Aorta (tissue), 5 donors: ENCODE measurements at regions of chr20 and their contacts with region 1.

Region 1: DNA sequence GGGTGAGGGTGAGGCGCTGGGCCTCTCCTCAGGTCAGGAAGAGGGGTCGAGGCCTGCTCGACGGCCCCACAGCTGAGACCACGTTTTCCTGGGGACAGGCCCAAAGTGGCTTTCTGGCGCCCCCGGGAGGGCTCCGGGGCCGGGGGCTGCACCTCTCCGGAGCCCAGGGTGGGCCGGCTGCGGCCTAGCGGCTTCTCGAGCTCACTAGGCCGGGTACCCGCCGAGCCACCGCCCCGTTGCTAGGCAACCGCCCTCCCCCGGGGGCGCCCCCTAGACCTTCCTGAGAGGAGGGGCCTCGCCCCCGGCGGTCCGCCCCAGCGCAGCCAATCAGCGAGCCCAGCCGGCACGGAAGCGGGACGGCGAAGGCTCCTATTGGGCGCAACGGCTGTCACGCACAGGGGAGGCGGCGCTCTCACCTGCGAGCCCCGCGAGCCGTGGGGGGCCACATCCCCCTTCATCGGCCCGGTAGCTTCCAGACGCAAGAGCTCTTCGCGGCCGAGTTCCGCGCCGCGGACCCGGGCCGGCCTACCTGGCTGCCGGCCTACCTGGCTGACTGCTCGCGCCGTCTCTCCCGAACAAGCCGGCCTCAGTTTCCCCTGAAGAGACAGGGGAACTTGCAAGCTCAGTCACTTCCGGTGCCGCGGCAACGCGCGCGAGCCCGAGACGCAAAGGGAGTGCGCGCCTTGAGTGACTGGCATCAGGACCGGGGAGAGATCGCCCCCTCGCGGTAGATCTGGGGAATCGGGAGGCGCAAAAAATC is 831 bp upstream of the BCL2L1 start:
- DNase-seq: peak; percentile 99
- ATAC-seq: peak; percentile 97
- H3K4me3 ChIP-seq: peak overlapping the region; percentile 65 to 94
- H3K27ac ChIP-seq: peak overlapping the region; percentile 87 to 95
- H3K4me1 ChIP-seq: no peaks in the 10 kb centered on the region
- H3K27me3 ChIP-seq: no peaks in the 10 kb centered on the region

Region 2: DNA sequence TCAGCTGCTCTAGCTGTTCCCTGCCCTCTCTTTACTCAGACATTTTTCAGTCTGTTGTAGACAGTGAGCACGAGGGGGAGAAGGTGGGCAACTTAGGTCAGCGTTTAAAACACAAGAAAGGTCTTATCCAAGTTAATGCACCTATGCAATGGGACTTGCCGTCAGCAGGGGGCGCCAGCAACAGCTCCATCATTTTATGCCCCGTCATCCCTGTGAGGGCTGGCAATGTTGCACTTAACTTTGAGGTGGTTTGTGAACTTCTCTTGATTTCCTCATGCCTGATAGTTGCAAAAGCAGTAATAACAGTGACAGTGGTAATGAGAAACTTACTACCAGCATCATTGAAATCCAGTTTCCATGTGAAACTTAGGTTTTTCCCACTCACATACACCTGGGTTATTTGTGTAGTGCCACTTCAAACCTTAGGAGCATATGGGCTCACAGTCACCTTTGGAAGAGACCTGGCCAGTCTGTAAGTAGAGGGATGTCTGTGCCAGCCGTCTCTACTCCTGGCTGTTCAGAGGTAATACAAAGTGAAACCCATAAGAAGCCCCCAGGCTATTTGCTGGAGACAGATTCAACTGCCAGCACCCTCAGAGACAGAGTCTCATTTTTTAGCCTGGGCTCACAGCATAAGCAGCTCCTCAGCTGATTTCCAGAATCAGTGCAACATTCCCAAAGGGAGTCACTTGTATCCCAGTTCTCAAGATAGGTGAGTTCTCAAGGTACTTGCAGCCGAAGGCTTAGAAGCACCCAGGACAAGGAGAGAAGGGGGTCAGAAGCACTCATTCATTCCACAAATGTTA is 163.2 kb before region 1 on chr20:
- intact Hi-C with region 1: loop called in 1 of 2 experiments (anchors 5 kb)
- DNase-seq: peak; percentile 86 to 91
- ATAC-seq: peak; percentile 75
- H3K4me3 ChIP-seq: no peak overlapping the region
- H3K27ac ChIP-seq: peak overlapping the region; percentile 91 to 92
- H3K4me1 ChIP-seq: peaks cover 3 to 4% of the 10 kb centered on the region in 2 donors
- H3K27me3 ChIP-seq: no peaks in the 10 kb centered on the region

Region 3: DNA sequence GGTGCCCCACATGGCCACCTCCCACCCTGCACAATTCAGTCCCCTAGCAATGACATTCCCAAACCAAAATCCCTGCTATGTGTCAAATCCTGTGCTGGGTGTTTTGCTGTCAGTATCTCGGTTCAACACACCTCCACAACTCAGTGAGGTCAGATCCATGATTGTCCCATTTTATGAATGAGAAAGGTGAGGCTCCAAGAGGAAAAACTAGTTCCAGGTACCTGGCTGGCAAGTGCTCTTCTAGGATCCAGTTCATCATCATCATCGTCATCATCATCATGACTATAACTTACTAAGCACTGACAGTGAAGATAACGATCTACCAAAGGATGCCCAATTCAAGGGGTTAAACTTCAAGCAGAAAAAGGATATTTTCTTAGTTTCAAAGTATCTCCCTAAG is 103.2 kb before region 1 on chr20:
- intact Hi-C with region 1: loop called in 1 of 2 experiments (anchors 5 kb)
- DNase-seq: no peak
- ATAC-seq: no peak
- H3K4me3 ChIP-seq: no peak overlapping the region
- H3K27ac ChIP-seq: no peak overlapping the region
- H3K4me1 ChIP-seq: no peaks in the 10 kb centered on the region
- H3K27me3 ChIP-seq: no peaks in the 10 kb centered on the region

Region 4: DNA sequence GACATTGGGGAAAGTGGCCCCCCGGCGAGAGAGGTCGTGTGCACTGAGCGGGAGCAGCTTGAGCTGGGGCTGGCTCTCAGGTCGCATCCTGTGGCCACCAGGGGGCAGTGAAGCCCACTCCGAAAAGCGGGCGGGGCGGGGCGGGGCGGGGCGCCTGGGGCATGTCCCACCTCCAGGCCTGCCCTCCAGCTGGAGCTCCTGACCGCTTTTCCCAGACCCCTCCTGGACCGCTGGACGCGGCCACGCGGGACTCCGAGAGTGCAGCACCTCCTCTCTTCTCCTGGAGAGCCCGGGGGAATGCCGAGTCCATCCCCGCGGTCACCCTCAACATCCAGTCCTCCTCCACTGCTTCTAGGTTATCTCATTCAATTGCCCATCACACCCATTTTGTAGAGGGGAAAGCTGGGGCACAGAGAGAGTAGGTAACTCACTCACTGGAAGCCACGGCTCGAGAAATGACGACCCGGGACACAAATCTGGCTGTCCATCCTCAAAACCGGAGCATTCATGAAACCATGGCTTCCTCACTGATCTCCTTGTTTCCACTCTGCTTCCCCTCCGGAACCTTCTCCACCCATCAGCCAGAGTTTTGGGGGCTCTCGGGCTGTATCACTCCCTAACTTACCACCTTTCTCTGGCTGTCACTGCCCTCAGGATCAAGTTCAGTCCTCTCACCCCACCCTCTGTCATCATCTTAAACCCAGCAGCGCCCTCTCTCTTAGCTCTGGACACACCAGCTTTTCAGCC is 61.7 kb before region 1 on chr20:
- intact Hi-C with region 1: loop called (anchors 1 to 2 kb)
- DNase-seq: peak; percentile 87 to 94
- ATAC-seq: peak; percentile 90
- H3K4me3 ChIP-seq: no peak overlapping the region
- H3K27ac ChIP-seq: peak overlapping the region in 1 of 2 donors; percentile 41
- H3K4me1 ChIP-seq: no peaks in the 10 kb centered on the region
- H3K27me3 ChIP-seq: no peaks in the 10 kb centered on the region

Region 5: DNA sequence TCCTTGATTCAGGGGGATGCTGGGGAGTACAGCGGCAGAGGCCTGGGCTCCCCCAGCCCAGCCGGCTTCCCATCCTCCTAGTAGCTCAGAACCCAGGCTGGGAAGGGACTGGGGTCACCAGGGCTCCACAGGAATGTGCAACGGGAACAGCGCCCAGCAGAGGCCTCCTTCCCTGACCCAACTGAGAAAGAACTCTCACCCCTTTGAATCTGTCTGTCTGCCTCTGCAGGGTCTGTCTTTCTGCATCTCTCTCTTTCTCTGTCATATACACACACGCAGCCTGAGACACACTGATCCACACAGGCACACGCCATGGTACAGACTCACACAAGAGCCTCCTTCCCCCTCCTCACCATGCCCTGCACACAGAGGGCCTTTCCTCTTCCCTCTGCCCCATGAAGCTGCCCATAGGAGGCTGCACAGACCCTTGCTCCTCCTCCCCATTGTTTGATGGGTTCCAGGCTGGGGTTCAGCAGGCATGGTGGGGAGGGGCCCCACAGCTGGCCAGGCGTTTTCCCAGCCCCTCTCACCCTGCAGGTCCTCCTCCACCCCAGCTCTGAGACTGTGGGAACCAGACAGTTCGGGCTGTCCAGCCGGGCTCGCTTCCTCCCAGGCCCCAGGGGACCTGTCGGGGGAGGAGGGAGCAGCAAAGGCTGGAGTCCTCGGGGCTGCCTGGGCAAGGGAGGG is 119.1 kb after region 1 on chr20:
- intact Hi-C with region 1: loop called in 1 of 2 experiments (anchors 10 kb)
- DNase-seq: peak; percentile 88 to 89
- ATAC-seq: peak; percentile 56
- H3K4me3 ChIP-seq: peak overlapping the region in 1 of 2 donors; percentile 21
- H3K27ac ChIP-seq: peak overlapping the region; percentile 71 to 82
- H3K4me1 ChIP-seq: no peaks in the 10 kb centered on the region
- H3K27me3 ChIP-seq: no peaks in the 10 kb centered on the region